CD4-positive, alpha-beta memory T cell (primary cell): ENCODE measurements at regions of chr10 and their contacts with region 1.

Region 1: GRCh38 chr10:84139126-84140035 is at the start of gene GHITM:
- DNase-seq: peak; percentile 99 to 100 (median 100)
- H3K4me3 ChIP-seq: peak within 1 kb of the TSS; percentile 43 to 95
- H3K4me3 Mint-ChIP-seq: peak within 1 kb of the TSS; percentile 89 to 99 (median 96)
- H3K27ac ChIP-seq: peak within 1 kb of the TSS; percentile 97
- H3K27ac Mint-ChIP-seq: peak within 1 kb of the TSS; percentile 96 to 99 (median 98)
- H3K4me1 ChIP-seq: peaks cover 25% of the 10 kb centered on the region
- H3K4me1 Mint-ChIP-seq: peaks cover 20 to 34% (median 24%) of the 10 kb centered on the region in 4 donors
- H3K27me3 ChIP-seq: no peaks in the 10 kb centered on the region
- H3K27me3 Mint-ChIP-seq: no peaks in the 10 kb centered on the region
- total RNA-seq, gene GHITM: 83.4 to 88.6 TPM

Region 2: DNA sequence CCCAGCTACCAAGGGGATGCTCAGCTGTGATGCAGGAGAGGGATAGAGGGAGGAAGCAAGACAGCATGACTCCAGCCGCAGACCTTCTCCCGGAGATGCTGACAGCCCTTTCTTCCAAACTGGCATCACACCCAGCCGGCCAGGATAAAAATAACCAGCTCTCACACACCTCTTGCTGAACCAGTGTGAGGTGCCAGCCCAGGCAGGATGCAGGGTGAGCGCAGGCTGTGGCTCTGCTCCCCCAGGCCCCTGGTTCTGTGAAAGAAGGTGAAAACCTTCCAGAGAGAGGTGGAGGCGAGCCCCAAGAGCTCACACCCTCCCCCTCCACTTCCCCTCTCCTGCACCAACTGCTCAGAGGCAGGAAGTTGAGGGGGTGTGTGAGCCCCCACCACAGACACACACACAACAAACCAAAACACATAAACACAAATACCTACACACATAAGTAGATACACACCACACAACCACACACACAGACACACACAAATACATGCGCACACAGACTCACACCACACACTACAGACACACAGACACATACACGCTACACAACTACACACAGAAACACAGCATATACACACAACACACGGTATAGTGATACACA is 38.3 kb after region 1 on chr10:
- CTCF ChIA-PET with region 1: no interaction called
- POLR2A ChIA-PET with region 1: interaction called, 11 read pairs
- intact Hi-C with region 1: no loop called
- DNase-seq: peak; percentile 43 to 68 (median 59)
- H3K4me3 ChIP-seq: no peak overlapping the region
- H3K4me3 Mint-ChIP-seq: no peak overlapping the region
- H3K27ac ChIP-seq: no peak overlapping the region
- H3K27ac Mint-ChIP-seq: no peak overlapping the region
- H3K4me1 ChIP-seq: peaks cover 30% of the 10 kb centered on the region
- H3K4me1 Mint-ChIP-seq: peaks cover 6 to 11% (median 7%) of the 10 kb centered on the region in 4 donors
- H3K27me3 ChIP-seq: no peaks in the 10 kb centered on the region
- H3K27me3 Mint-ChIP-seq: no peaks in the 10 kb centered on the region

Region 3: DNA sequence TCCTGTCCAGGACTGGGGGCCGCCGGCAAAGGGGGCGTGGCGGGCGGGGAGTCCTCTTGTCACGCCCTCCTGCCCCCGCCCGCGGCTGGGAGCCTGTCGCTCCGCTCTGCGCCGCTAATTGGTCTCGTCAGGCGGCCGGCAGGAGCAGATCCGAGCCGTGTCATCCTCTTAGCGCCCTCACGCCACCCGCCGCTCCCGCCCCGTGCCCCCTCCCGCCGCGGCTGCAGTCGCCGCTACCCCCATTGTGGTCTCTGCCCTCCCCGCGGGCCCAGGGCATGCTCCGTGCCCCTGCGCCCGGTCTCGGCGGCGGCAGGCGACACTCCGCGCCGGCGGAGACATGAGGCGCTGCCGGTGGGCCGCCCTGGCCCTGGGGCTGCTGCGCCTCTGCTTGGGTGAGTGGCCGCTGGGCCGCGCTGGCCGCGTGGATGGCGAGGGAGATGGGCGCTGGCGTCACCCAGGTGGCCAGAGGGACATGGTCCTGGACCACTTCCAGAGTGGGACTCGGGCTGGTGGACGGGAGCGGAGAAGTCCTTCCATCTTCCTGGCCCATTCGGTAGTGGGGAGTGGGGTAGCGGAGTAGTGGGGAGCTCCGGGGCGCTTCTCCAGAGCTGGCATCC is 55.2 kb after region 1 on chr10 and contains the start of gene CDHR1:
- CTCF ChIA-PET with region 1: no interaction called
- POLR2A ChIA-PET with region 1: no interaction called
- intact Hi-C with region 1: loop called (anchors 5 kb)
- DNase-seq: peak in 2 of 5 donors; percentile 25 to 30
- H3K4me3 ChIP-seq: peak within 1 kb of the TSS in 1 of 2 donors; percentile 32
- H3K4me3 Mint-ChIP-seq: peak within 1 kb of the TSS; percentile 40 to 81 (median 60)
- H3K27ac ChIP-seq: no peak within 1 kb of the TSS
- H3K27ac Mint-ChIP-seq: no peak within 1 kb of the TSS
- H3K4me1 ChIP-seq: peaks cover 24% of the 10 kb centered on the region
- H3K4me1 Mint-ChIP-seq: peaks cover 9 to 27% (median 12%) of the 10 kb centered on the region in 4 donors
- H3K27me3 ChIP-seq: peaks cover 13% of the 10 kb centered on the region
- H3K27me3 Mint-ChIP-seq: peaks cover 19 to 26% of the 10 kb centered on the region in 2 donors
- total RNA-seq, gene CDHR1: 0.12 to 0.17 TPM

Region 4: GRCh38 chr10:84328418-84329195 is 189.2 kb after region 1 on chr10 and contains the start of gene CCSER2:
- CTCF ChIA-PET with region 1: no interaction called
- POLR2A ChIA-PET with region 1: interaction called, 14 read pairs
- intact Hi-C with region 1: loop called (anchors 1 kb)
- DNase-seq: peak; percentile 87 to 93 (median 89)
- H3K4me3 ChIP-seq: peak within 1 kb of the TSS; percentile 61 to 64
- H3K4me3 Mint-ChIP-seq: peak within 1 kb of the TSS; percentile 90 to 97 (median 96)
- H3K27ac ChIP-seq: peak within 1 kb of the TSS; percentile 98
- H3K27ac Mint-ChIP-seq: peak within 1 kb of the TSS; percentile 97 to 100 (median 99)
- H3K4me1 ChIP-seq: peaks cover 39% of the 10 kb centered on the region
- H3K4me1 Mint-ChIP-seq: peaks cover 24 to 47% (median 30%) of the 10 kb centered on the region in 4 donors
- H3K27me3 ChIP-seq: no peaks in the 10 kb centered on the region
- H3K27me3 Mint-ChIP-seq: peaks cover 0 to 2% of the 10 kb centered on the region in 2 donors
- total RNA-seq, gene CCSER2: 144 to 151 TPM